Activated T-helper 1 cell treated with anti-CD3 and anti-CD28 coated beads, Interleukin-12 subunit alpha, Interleukin-12 subunit beta, Interleukin-2, Interleukin-4 antibody, amounts not matched to agents 30 ng/mL and 10 ng/mL and 1 ng/mL, durations not matched to agents 14 hours and 24 hours and 36 hours (primary cell): ENCODE measurements at regions of chrX and their contacts with region 1.

Region 1: DNA sequence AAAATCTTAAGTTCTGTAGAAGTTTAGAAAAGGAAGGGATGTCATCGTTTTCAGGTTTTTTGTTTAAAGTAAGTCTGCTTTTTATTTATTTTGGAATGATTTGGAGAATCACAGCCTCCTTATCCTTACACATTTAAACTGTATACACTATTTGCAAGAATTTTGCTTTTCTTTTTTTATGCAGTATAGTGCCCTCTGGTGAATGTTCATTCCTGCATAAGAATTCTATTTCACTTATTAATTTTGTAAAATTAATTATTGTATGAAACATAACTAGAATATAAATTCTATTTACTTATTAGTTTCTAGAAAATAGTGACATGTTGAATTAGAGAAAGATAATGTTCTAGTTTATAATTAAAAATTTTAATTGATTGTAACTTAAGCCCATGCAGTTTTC is 44.6 kb downstream of the DACH2 start:
- DNase-seq: no peak
- H3K4me3 Mint-ChIP-seq: no peak overlapping the region
- H3K27ac Mint-ChIP-seq: no peak overlapping the region
- H3K4me1 Mint-ChIP-seq: no peaks in the 10 kb centered on the region
- H3K27me3 Mint-ChIP-seq: no peaks in the 10 kb centered on the region

Region 2: GRCh38 chrX:85851418-85851817 is 341.4 kb before region 1 on chrX:
- intact Hi-C with region 1: loop called (anchors 5 kb)
- DNase-seq: no peak
- H3K4me3 Mint-ChIP-seq: no peak overlapping the region
- H3K27ac Mint-ChIP-seq: no peak overlapping the region
- H3K4me1 Mint-ChIP-seq: no peaks in the 10 kb centered on the region
- H3K27me3 Mint-ChIP-seq: no peaks in the 10 kb centered on the region

Region 3: DNA sequence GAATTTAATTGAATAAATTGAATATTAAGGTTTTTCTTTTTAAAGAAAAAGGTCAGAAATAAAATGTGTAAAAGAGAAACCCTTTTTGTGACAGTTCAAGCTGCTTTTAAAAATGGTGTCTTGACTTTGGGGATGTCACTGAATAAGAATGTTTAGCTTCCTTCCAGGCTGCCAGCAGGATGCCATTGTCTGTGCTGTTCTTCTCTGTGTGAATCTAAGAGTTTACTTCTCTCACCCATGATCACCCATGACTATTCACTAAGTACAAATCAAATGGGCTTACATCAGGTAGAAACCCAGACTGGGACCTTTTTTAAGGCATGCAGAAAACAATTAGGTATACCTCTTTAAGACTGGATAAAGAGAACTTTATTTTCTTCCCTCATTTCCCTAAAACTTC is 70.7 kb after region 1 on chrX:
- intact Hi-C with region 1: no loop called
- DNase-seq: no peak
- H3K4me3 Mint-ChIP-seq: no peak overlapping the region
- H3K27ac Mint-ChIP-seq: no peak overlapping the region
- H3K4me1 Mint-ChIP-seq: no peaks in the 10 kb centered on the region
- H3K27me3 Mint-ChIP-seq: no peaks in the 10 kb centered on the region